Activated T-helper 2 cell treated with anti-CD3 and anti-CD28 coated beads, Interferon-gamma antibody, Interleukin-2, Interleukin-4, amounts not matched to agents 10 μg/mL and 5 μg/mL and 100 μg/mL, durations not matched to agents 14 hours and 24 hours and 36 hours (primary cell): ENCODE measurements at regions of chr11 and their contacts with region 1.

Region 1: DNA sequence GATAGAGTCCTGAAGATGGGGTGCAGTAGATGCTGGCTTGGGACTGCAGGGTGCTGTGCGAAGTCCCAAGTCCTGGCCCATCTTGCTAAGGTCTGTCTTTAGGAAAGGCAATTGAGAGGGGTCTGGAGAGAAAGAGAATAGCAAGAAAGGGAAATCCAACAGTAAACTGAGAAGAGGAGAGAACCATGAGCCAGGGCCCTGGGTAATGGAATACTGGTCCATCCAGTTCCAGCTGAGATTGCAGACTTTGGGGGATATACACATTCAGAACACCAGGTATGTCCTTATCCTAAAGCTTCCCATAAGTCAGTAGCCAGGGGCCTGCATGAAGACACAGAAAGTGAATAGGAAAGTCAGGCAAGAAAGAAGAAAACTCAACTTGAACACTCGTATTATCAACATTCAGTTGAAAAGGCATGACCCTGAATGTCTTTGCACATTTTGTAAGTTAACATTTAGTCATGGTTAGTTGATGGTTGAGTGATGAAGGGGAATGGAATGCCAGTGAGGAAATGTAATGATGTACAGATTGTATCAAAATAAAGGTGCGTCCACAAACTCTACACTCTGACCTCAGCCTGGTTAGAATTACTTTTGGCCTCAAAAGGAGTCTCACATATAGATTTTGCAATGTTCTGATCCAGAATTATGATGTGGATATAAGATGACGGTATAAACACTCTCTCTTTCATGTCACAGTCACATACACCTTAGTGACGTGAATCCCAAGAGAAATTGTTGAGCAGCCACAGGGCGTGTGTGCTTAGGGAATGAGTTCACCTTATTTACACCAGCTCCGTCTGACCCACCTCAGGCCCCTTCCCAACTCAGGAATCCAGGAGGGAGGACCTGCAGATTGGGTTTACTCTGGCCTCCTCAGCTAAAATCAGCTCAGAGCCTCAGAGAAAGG is 100.3 kb downstream of the RDX start:
- DNase-seq: no peak
- H3K4me3 Mint-ChIP-seq: no peak overlapping the region
- H3K27ac Mint-ChIP-seq: no peak overlapping the region
- H3K4me1 Mint-ChIP-seq: peaks cover 21% of the 10 kb centered on the region
- H3K27me3 Mint-ChIP-seq: peaks cover 41% of the 10 kb centered on the region

Region 2: DNA sequence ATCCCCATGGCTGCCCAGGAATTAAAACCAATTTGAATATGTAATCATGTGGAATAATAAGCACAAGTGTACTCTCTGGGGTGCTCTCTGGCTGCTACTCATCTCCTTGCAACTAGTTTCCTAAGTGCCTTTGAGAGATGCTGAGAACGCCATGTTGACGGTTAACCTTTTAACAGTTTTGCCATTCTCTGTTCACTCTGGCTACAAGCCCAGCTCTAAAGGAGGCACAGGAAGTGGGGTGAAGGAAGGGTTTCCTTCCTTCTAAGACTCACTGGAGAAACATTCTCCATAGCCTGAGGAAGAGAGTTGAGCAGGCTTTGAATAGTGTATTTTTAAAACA is 224.9 kb before region 1 on chr11:
- intact Hi-C with region 1: loop called (anchors 2 kb)
- DNase-seq: no peak
- H3K4me3 Mint-ChIP-seq: peak overlapping the region; percentile 11
- H3K27ac Mint-ChIP-seq: peak overlapping the region; percentile 89
- H3K4me1 Mint-ChIP-seq: peaks cover 60% of the 10 kb centered on the region
- H3K27me3 Mint-ChIP-seq: peaks cover 4% of the 10 kb centered on the region

Region 3: DNA sequence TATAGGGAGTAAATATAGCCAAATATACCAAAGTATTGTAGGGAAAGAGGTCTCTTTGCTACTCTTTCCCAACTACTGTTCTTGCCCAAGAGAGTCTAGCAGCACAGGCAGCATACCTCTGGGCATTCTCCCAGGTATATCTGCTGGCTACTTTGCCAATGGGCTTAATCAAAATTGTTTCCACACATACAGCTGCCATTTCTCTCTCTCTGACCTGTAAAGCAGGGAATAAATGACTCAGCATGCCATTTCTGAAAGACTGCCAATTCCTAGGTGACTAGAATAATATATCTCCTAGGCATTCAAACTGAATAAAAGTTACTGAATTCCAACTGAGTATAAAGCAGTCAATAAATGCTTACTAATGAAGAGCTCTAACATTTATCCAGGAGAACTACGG is 55.7 kb after region 1 on chr11:
- intact Hi-C with region 1: no loop called
- DNase-seq: no peak
- H3K4me3 Mint-ChIP-seq: no peak overlapping the region
- H3K27ac Mint-ChIP-seq: no peak overlapping the region
- H3K4me1 Mint-ChIP-seq: peaks cover 16% of the 10 kb centered on the region
- H3K27me3 Mint-ChIP-seq: no peaks in the 10 kb centered on the region

Region 4: GRCh38 chr11:110296226-110297075 is 100.4 kb after region 1 on chr11 and contains the start of gene RDX:
- intact Hi-C with region 1: loop called (anchors 10 kb)
- DNase-seq: peak; percentile 56
- H3K4me3 Mint-ChIP-seq: peak within 1 kb of the TSS; percentile 95
- H3K27ac Mint-ChIP-seq: peak within 1 kb of the TSS; percentile 63
- H3K4me1 Mint-ChIP-seq: peaks cover 43% of the 10 kb centered on the region
- H3K27me3 Mint-ChIP-seq: no peaks in the 10 kb centered on the region
- total RNA-seq, gene RDX: 63.3 and 64.8 TPM in 2 replicates

Region 5: DNA sequence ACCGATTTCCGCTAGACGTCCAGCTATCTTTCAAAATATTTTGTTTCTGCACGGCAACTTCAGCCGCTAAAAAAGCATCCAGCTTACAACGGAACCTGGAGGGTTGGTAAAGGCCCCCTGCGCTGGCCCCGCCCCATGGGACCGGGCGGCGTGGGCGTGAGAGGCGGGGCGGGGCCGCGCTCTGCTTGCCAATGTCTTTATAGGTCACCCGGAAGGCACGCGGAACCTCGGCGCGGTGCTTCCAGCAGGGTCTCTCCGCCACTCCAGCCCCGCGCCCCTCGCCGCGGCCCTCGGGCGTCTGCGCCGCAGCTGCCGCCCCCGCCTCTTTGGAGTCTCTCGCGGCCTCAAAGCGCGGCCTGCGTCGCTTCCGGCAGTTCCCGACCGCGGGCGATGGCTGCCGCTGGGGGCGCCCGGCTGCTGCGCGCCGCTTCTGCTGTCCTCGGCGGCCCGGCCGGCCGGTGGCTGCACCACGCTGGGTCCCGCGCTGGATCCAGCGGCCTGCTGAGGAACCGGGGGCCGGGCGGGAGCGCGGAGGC is 233.7 kb after region 1 on chr11 and contains the start of gene FDX1:
- intact Hi-C with region 1: loop called (anchors 1 kb)
- DNase-seq: peak; percentile 78
- H3K4me3 Mint-ChIP-seq: peak within 1 kb of the TSS; percentile 98
- H3K27ac Mint-ChIP-seq: peak within 1 kb of the TSS; percentile 94
- H3K4me1 Mint-ChIP-seq: peaks cover 41% of the 10 kb centered on the region
- H3K27me3 Mint-ChIP-seq: no peaks in the 10 kb centered on the region
- total RNA-seq, gene FDX1: 13.0 and 13.1 TPM in 2 replicates